ENCODE measurements at regions of chr19 and their contacts with region 1.

Region 1: DNA sequence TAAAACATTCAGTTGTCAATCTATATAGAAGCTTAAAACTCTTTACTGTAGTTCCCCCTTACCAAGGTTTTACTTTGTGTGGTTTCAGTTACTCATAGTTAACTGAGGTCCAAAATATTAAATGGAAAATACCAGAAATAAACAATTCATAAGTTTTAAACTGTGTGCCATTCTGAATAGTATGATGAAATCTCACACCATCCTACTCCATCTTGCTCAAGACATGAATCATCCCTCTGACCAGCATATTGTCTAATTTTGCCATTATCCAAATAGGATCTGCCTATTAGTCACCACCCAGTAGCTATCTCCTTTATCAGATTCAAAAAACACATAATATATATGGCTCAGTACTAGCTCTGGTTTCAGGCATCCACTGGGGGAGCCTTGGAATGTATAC is 22.4 kb downstream of the ZNF571 start:
- DNase-seq: no peak
- H3K4me3 ChIP-seq: no peak overlapping the region
- CTCF ChIP-seq: no peak
- POLR2A ChIP-seq: no peak

Region 2: GRCh38 chr19:37362733-37363132 is 209.5 kb before region 1 on chr19:
- intact Hi-C with region 1: no loop called
- DNase-seq: no peak
- H3K4me3 ChIP-seq: no peak overlapping the region
- CTCF ChIP-seq: no peak
- POLR2A ChIP-seq: no peak

Region 3: DNA sequence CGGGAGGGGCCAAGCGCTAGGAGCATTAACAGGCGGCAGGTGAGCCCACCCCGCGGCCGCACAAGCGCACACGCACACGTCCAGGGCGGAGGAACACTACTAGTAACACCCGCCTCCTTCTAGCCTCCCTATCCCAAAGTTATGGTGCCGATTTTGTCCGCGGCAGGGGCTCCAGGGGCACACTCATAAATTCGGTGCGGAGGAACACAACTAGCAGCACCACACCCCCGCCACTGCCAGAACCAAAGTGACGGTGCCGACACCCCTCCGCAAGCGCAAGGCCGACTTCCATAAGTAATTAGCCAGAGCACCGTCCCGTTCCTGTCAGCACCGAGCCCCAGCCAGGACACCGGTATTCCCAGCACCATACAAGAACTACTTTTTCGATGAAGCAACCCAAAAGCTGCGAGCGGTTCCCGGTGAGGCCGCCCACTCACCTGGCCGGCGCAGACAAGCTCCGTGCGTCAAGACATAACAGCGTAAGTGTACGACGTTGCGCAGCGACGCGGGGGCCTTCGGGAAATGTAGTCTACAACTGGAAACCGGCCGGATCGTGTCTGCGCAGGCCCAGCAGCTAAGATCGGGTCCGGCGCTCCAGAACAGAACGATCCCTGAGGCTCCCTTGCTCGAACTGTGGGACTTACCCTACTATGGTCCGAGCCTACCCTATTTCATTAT is 22.2 kb after region 1 on chr19 and contains the starts of genes ZNF540 and ZNF571:
- intact Hi-C with region 1: loop called (anchors 1 kb)
- DNase-seq: peak; percentile 94 to 99
- H3K4me3 ChIP-seq: peak within 1 kb of the TSS; percentile 73
- CTCF ChIP-seq: no peak
- POLR2A ChIP-seq: no peak
- total RNA-seq, gene ZNF540: 1.0 to 6.9 (median 2.0) TPM
- total RNA-seq, gene ZNF571: 3.3 to 6.6 (median 4.5) TPM